ENCODE measurements at regions of chr1 and their contacts with region 1.

Region 1: DNA sequence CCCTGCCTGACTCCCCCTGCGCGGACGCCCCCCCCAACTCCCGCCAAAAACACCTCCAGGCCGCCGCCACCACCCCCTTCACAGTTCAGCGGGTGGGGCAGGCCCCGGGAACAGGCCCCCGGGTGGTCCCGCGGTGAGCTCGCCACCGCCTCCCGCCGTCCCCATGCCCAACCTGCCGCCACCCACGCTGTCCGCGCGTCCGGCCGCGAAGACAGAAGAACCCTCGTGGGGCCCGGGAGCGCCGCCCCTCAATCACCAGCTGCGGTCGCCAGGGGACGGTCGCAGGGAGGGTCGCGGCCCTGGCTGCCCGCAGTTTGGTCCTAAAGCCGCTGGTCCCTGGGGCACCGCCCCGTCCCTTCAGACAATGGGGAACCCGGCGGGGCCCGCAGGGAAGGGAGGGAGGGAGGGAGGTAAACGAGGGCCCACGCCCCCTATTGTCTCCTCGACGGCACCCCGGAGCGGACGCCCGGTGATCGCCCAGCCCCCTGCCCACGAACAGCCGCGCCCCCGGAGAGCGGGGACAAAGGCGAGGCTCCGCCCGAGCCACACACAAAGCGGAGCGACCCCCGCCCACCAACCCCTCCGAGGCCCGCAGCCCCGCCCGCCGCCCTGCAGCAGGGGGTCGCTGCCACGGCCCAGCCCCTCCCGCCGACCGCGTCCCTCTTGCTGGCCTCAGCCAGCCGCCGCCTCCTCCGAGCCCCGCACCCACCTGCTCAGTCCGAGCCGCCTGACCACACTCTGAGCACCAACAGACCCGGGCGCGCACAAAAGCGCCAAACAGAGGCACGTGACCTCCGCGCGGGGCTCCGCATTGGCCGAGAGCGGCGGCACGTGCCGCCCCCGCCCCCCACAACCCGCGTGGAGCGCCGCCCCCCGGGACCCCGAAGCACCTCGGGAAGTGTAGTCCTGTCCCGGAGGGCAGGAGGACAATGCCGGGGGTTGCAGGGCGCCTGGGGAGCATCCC is at the start of gene STMN1:
- DNase-seq: peak; percentile 96
- ATAC-seq: peak; percentile 81
- H3K4me3 Mint-ChIP-seq: peak within 1 kb of the TSS; percentile 84
- H3K27ac Mint-ChIP-seq: peak within 1 kb of the TSS; percentile 83
- H3K4me1 Mint-ChIP-seq: peaks cover 25% of the 10 kb centered on the region
- H3K27me3 Mint-ChIP-seq: no peaks in the 10 kb centered on the region
- total RNA-seq, gene STMN1: 557 to 771 TPM

Region 2: DNA sequence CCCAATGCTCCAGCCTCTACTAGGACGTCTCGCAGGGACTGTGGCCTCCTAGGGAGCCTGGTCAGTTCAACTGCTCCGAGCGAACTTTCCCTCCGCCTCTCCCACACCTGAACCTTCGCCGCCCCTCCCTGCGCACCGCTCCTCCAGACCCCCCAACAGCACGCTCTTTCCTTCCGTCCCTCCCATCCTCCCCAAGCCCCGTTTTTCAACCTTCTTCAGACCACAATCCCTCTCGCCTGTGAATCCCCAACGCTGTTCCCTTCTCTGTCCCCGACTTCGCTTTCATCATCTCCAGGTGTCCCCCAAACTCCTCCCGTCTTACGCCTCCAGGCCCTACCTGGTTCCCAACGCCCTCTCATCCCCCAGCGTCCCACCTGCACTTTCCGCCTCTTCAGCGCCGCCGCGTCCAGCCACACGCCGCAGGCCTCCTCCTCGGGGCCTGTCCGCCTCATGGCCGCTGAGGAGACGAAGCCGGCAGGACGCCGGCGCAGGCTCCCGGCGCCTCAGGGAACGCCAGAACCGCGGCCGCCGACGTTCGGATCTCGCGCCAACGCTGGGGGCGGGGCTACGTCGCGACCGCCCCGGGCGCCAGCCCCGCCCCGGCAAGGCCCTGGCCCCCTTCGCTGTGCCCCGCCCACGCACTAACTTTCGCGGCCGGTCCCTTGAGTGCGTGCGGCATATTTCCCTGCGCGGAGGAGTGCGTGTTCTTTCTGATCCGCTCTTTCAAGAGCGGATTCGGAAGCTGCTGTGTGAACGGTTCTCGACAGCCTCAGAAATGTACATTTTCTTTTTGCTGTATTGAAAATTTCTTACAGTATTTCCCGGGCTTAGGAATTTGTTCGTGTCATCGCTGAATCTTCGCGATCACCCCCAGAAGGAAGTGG is 46.8 kb before region 1 on chr1 and contains the start of gene AUNIP:
- CTCF ChIA-PET with region 1: no interaction called
- POLR2A ChIA-PET with region 1: no interaction called
- intact Hi-C with region 1: loop called in 1 of 2 experiments (anchors 1 kb)
- DNase-seq: peak; percentile 97
- ATAC-seq: peak; percentile 95
- H3K4me3 Mint-ChIP-seq: peak within 1 kb of the TSS; percentile 94
- H3K27ac Mint-ChIP-seq: peak within 1 kb of the TSS; percentile 93
- H3K4me1 Mint-ChIP-seq: peaks cover 13% of the 10 kb centered on the region
- H3K27me3 Mint-ChIP-seq: no peaks in the 10 kb centered on the region
- total RNA-seq, gene AUNIP: 9.6 to 12.9 TPM

Region 3: DNA sequence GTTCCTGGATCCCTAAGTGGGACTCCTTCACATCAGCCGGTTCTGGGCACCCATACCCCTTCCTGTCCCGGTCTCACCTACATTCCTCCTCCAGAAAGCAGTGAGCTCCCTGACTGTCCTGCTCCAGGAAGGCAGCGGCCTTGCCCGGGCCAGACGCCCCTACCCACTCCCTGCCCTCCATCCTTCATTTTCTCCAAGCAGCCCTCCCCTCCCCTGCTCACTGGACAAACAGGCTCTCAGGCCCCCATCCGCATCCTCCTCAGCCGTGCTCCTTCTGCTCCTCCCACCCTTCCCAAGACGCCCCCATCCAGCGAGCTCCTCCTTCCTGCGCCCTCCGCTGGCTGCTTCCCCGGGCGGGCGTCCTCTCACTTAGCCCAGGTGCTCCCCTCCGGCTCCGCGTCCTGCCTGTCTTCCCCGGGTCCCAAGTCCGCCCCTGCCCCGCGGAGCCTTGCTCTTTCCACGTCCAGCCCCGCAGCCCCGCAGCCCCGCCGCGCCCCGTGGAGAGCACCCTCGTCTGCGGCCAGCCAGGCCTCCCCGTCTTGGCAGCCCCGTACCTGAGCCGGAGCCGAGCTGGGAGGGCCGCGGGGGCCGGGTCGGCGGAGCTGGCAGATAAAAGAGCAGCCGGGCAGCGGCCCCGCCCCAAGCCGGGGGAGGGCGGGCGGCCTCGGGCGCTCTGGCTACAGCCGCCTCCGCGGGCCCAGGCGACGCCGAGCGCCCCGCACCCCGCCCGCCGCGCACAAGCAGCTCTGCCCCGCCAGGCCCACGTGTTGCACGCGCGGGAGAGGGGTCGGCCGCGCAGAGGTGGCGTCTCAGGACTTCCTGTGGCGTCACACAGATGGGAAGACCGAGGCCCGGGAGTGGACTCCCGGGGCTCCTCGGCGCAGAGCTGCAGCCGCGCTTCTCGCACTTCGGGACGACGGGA is 30.8 kb before region 1 on chr1 and contains the start of gene PAQR7:
- CTCF ChIA-PET with region 1: no interaction called
- POLR2A ChIA-PET with region 1: no interaction called
- intact Hi-C with region 1: loop called in 1 of 2 experiments (anchors 1 kb)
- DNase-seq: peak; percentile 78
- ATAC-seq: peak; percentile 86
- H3K4me3 Mint-ChIP-seq: peak within 1 kb of the TSS; percentile 82
- H3K27ac Mint-ChIP-seq: peak within 1 kb of the TSS; percentile 63
- H3K4me1 Mint-ChIP-seq: peaks cover 5% of the 10 kb centered on the region
- H3K27me3 Mint-ChIP-seq: peaks cover 2% of the 10 kb centered on the region
- total RNA-seq, gene PAQR7: 3.9 to 4.4 TPM

Region 4: DNA sequence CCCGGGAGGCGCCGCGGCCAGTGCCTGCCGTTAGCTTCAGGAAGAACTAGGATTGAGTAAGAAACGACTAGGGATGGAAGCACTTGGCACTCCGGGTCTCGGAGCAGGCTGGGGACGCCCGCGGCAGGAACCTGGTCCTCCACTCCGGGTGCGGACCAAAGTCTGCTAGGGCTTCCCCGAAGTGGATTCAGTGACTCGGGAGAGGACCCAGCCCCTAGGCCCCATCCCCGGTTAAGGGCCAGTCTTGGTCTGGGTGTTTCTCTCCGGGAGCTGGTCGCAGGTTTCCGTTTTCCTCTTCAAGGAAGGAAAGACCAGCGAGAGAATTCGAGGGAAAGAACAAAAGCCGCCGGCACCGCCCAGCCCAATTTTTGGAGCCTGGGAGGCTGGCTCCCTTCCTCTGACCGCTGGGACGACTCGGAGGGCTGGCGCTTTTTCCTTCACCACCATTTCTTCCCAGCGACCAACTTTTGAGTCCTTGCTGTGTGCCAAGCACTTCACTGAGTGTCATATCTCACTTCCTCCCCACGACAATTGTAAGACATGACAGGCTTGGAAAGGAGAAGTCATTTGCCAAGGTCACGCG is 17.1 kb after region 1 on chr1:
- CTCF ChIA-PET with region 1: interaction called, 5 read pairs
- POLR2A ChIA-PET with region 1: interaction called, 5 read pairs
- intact Hi-C with region 1: loop called in 1 of 2 experiments (anchors 1 kb)
- DNase-seq: peak; percentile 43
- ATAC-seq: peak; percentile 42
- H3K4me3 Mint-ChIP-seq: peak overlapping the region; percentile 53
- H3K27ac Mint-ChIP-seq: no peak overlapping the region
- H3K4me1 Mint-ChIP-seq: peaks cover 25% of the 10 kb centered on the region
- H3K27me3 Mint-ChIP-seq: peaks cover 8% of the 10 kb centered on the region

Region 5: DNA sequence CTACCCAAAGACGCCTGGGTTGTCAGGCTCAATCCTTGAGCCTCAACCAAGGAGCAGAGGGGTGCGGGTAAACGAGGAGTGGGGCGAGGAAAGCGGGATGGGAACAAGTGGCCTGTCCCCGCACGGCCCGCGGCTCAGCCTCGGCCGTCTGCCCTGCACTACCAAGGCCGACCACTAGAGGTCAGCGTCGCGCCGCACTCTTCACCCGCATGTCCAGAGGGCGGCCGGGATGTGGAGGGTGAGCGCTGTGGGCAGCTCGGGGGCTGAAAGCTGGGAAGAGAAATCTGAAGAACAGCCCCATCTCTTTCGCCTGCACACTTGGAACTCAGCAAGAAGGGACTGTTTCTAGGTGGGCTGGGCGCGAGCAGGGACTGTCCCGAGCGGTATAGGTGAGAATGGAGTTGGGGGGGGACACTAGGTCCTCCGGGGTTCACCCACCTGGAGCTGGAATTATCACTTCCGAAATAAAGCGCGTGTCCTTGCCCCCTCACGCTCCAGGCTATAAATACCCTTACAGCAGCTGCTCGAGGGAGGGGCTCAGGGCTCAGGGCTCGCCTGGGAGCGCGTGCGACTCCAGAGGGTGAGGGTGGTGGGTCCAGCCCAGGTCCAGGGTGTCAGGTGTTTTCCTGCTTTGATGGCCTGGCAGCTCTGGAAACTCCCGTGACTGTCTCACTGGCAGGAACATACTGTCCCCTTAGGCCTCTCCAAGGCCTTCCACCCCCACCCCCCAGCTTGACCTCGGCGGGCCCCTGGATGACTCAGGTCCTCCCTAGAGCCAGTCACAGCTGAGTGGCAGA is 130.2 kb after region 1 on chr1:
- CTCF ChIA-PET with region 1: no interaction called
- POLR2A ChIA-PET with region 1: no interaction called
- intact Hi-C with region 1: loop called in 1 of 2 experiments (anchors 1 kb)
- DNase-seq: peak; percentile 86
- ATAC-seq: peak; percentile 76
- H3K4me3 Mint-ChIP-seq: peak overlapping the region; percentile 80
- H3K27ac Mint-ChIP-seq: peak overlapping the region; percentile 78
- H3K4me1 Mint-ChIP-seq: peaks cover 13% of the 10 kb centered on the region
- H3K27me3 Mint-ChIP-seq: peaks cover 6% of the 10 kb centered on the region

Region 6: DNA sequence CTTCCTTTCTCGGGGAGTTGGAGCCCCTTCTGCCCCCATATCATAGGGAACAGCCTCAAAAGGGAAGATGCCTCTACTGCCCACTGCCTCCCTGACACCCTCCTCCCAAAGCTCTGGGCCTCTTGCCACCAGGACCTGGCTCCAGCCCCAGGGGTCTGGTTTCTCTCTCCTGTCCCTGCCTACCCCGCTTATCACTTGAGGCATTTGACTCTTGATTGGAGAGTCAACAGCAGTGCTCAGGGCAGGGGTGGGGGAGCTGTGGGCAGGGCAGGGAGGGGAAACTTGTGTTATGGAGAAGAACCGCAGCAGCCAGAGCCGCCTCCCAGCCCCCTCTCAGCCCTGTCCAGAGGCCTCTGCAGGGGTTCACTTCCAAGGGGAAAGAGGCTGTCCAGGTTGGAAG is 160.9 kb after region 1 on chr1:
- CTCF ChIA-PET with region 1: no interaction called
- POLR2A ChIA-PET with region 1: no interaction called
- intact Hi-C with region 1: no loop called
- DNase-seq: no peak
- ATAC-seq: no peak
- H3K4me3 Mint-ChIP-seq: no peak overlapping the region
- H3K27ac Mint-ChIP-seq: no peak overlapping the region
- H3K4me1 Mint-ChIP-seq: no peaks in the 10 kb centered on the region
- H3K27me3 Mint-ChIP-seq: no peaks in the 10 kb centered on the region

Region 7: GRCh38 chr1:26279456-26280332 is 373.7 kb after region 1 on chr1 and contains the start of gene SH3BGRL3:
- CTCF ChIA-PET with region 1: no interaction called
- POLR2A ChIA-PET with region 1: no interaction called
- intact Hi-C with region 1: no loop called
- DNase-seq: peak; percentile 92
- ATAC-seq: peak; percentile 56
- H3K4me3 Mint-ChIP-seq: peak within 1 kb of the TSS; percentile 78
- H3K27ac Mint-ChIP-seq: peak within 1 kb of the TSS; percentile 94
- H3K4me1 Mint-ChIP-seq: peaks cover 82% of the 10 kb centered on the region
- H3K27me3 Mint-ChIP-seq: no peaks in the 10 kb centered on the region
- total RNA-seq, gene SH3BGRL3: 267 to 381 TPM

Region 8: DNA sequence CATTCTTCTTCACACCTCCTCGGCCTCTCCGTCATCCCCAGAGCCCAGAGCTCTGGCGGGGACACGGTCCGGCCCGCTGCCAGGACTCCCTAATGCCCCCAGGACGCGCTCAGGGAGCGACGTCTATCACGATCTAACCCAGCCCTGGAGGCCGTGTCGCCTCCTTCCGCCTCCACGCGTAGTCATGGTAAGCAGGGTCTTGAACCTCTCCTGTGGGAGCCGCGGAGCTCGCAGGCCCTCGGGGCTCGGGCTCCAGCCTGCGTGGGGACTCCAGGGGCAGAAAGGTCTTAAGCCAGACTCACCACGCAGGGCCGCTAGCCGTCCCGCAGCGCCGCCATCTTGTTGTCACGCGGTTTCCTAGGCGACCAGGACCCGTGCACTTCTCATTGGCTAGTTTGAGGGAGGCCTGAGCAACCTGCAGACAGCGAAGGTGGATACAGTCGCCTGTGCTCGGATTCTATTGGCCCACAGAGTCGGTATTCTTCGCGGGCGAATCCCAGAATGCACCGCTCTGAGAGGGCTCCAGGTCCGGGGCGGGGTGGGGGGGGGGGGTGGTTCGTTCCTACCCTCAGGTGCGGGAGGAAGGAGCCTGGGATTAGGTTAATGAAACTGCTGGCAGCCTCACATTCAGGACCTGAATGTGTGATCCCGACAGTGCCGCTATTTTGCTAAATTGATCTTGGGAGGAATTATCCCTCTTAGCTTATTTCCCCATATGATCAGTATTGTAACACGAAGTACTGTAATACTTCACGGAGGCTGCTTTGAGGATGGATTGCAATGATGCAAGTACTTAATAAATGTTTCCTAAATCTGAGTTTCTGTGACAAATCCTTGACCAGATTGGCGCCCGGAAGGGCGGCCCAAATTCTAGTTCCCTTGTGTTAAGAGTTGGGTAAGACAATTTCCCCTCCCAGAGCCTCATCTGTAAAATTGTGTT is 400.6 kb after region 1 on chr1 and contains the start of gene UBXN11:
- CTCF ChIA-PET with region 1: no interaction called
- POLR2A ChIA-PET with region 1: no interaction called
- intact Hi-C with region 1: loop called in 1 of 2 experiments (anchors 5 kb)
- DNase-seq: peak; percentile 96
- ATAC-seq: peak; percentile 94
- H3K4me3 Mint-ChIP-seq: peak within 1 kb of the TSS; percentile 90
- H3K27ac Mint-ChIP-seq: peak within 1 kb of the TSS; percentile 95
- H3K4me1 Mint-ChIP-seq: peaks cover 32% of the 10 kb centered on the region
- H3K27me3 Mint-ChIP-seq: no peaks in the 10 kb centered on the region
- total RNA-seq, gene UBXN11: 19.4 to 22.2 TPM